CD14-positive monocyte (primary cell): ENCODE measurements at regions of chr15 and their contacts with region 1.

Region 1: GRCh38 chr15:52139599-52140491 is 27.3 kb upstream of the BCL2L10 start:
- DNase-seq: peak; percentile 59 to 71 (median 70)
- H3K4me3 ChIP-seq: peak overlapping the region in 1 of 3 experiments; percentile 15
- H3K4me3 Mint-ChIP-seq: peak overlapping the region; percentile 58 to 80
- H3K27ac ChIP-seq: no peak overlapping the region
- H3K27ac Mint-ChIP-seq: peak overlapping the region in 1 of 7 donors; percentile 65
- H3K4me1 ChIP-seq: peaks cover 42 to 46% of the 10 kb centered on the region in 2 donors
- H3K4me1 Mint-ChIP-seq: peaks cover 44% of the 10 kb centered on the region
- H3K27me3 ChIP-seq: no peaks in the 10 kb centered on the region
- H3K27me3 Mint-ChIP-seq: peaks cover 0 to 6% (median 5%) of the 10 kb centered on the region in 3 donors
- CTCF ChIP-seq: peak; percentile 97

Region 2: GRCh38 chr15:51982013-51982769 is 157.7 kb before region 1 on chr15:
- intact Hi-C with region 1: loop called (anchors 2 to 5 kb)
- DNase-seq: peak; percentile 48 to 79 (median 68)
- H3K4me3 ChIP-seq: peak overlapping the region; percentile 13 to 64 (median 43)
- H3K4me3 Mint-ChIP-seq: peak overlapping the region; percentile 76 to 87
- H3K27ac ChIP-seq: peak overlapping the region in 1 of 2 donors; percentile 38
- H3K27ac Mint-ChIP-seq: peak overlapping the region; percentile 40 to 78 (median 61)
- H3K4me1 ChIP-seq: peaks cover 10 to 22% of the 10 kb centered on the region in 2 donors
- H3K4me1 Mint-ChIP-seq: peaks cover 15% of the 10 kb centered on the region
- H3K27me3 ChIP-seq: no peaks in the 10 kb centered on the region
- H3K27me3 Mint-ChIP-seq: peaks cover 0 to 2% (median 2%) of the 10 kb centered on the region in 3 donors
- CTCF ChIP-seq: peak; percentile 82

Region 3: DNA sequence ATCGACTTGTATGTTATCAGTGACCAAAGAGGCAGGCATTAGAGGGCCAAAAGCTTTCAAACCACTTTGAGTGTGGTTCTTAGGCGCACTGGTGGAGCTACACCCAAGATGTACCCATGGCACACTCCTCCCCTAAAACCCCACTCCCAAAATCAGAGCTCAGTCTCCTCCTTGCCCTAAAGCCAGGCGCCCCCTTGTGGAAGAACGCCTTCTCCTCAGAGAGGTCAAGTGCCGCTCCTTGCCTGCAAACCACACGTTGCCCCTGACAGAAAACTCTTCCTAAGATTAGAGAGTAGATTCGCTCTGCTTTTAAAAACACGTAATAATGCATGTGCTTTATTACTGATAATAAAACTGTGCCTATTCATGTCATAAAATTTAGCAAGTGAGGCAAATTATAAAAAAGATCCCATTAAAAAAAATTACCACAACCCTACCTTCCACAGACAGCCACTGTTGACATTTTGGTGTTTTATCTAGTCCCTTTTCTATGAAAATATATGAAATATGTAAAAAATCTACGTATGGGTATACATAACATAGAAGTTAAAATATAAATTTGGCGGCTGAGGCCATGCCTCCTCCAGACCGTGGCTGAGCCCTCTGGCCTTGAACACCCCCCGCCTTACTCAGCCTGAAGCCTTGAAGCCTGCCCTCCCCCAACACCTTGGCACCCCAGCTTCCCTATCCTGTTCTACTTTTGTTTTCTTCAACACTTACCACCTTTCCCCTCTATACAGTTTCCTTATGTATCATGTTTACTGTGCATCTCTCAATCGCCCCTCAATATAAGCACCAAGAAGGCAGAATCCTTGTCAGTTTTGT is 60.8 kb before region 1 on chr15:
- intact Hi-C with region 1: loop called (anchors 2 to 10 kb)
- DNase-seq: peak; percentile 60 to 78 (median 73)
- H3K4me3 ChIP-seq: no peak overlapping the region
- H3K4me3 Mint-ChIP-seq: no peak overlapping the region
- H3K27ac ChIP-seq: no peak overlapping the region
- H3K27ac Mint-ChIP-seq: peak overlapping the region in 1 of 7 donors; percentile 34
- H3K4me1 ChIP-seq: peaks cover 20 to 27% of the 10 kb centered on the region in 2 donors
- H3K4me1 Mint-ChIP-seq: peaks cover 40% of the 10 kb centered on the region
- H3K27me3 ChIP-seq: no peaks in the 10 kb centered on the region
- H3K27me3 Mint-ChIP-seq: peaks cover 0 to 5% (median 0%) of the 10 kb centered on the region in 3 donors
- CTCF ChIP-seq: peak; percentile 97

Region 4: GRCh38 chr15:52103217-52104207 is 36.3 kb before region 1 on chr15:
- intact Hi-C with region 1: no loop called
- DNase-seq: peak; percentile 56 to 82 (median 73)
- H3K4me3 ChIP-seq: no peak overlapping the region
- H3K4me3 Mint-ChIP-seq: no peak overlapping the region
- H3K27ac ChIP-seq: no peak overlapping the region
- H3K27ac Mint-ChIP-seq: peak overlapping the region in 4 of 7 donors; percentile 22 to 76 (median 51)
- H3K4me1 ChIP-seq: peaks cover 0 to 20% of the 10 kb centered on the region in 2 donors
- H3K4me1 Mint-ChIP-seq: peaks cover 21% of the 10 kb centered on the region
- H3K27me3 ChIP-seq: no peaks in the 10 kb centered on the region
- H3K27me3 Mint-ChIP-seq: peaks cover 0 to 2% (median 0%) of the 10 kb centered on the region in 3 donors
- CTCF ChIP-seq: no peak